Dorsolateral prefrontal cortex (tissue), 120 donors: ENCODE measurements at regions of chr3 and their contacts with region 1.

Region 1: DNA sequence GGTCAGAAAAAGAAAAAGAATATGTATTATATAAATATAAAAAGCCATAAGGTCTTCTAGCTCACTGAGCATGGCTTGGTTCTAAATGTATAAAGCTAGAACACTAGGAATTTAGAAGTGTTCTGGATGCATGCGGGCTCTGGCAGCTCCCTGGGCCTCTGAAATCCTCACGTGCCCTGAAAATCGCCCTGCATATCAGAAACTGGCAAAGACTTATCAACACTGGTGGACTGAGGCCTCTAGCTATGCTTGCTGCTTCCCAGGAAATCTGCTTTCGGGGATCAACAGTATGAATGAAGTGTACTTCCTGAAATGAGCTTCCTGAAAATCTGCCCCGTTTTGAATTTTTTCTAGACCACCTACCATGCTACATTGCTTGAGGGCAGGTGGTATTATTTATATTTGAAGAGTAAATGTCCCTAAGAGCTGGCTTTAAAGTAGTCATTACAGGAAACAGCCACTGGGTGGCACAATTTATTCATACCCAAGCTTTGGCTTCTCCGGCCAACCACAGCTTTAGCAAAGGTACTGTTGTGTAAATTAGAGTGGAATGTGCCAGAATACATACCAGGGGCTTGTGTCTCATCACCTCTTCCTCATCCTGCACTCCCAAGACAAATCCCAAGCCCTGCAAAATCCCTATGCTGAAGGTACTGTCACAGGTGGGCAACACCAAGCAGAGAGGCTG is 17.7 kb downstream of the CRTAP start:
- DNase-seq: peak in 3 of 10 donors; percentile 46 to 74 (median 56)
- H3K4me3 ChIP-seq: no peak overlapping the region
- H3K27ac ChIP-seq: peak overlapping the region in 13 of 59 donors; percentile 2 to 72 (median 19)
- H3K27me3 ChIP-seq: no peaks in the 10 kb centered on the region
- CTCF ChIP-seq: peak; percentile 62 to 94 (median 86)

Region 2: GRCh38 chr3:32989171-32989570 is 142.3 kb before region 1 on chr3:
- intact Hi-C with region 1: no loop called
- DNase-seq: no peak
- H3K4me3 ChIP-seq: no peak overlapping the region
- H3K27ac ChIP-seq: no peak overlapping the region
- H3K27me3 ChIP-seq: no peaks in the 10 kb centered on the region
- CTCF ChIP-seq: no peak

Region 3: GRCh38 chr3:33221241-33221640 is 89.8 kb after region 1 on chr3:
- intact Hi-C with region 1: loop called in 1 of 2 experiments (anchors 5 kb)
- DNase-seq: no peak
- H3K4me3 ChIP-seq: no peak overlapping the region
- H3K27ac ChIP-seq: no peak overlapping the region
- H3K27me3 ChIP-seq: peaks cover 0 to 13% (median 0%) of the 10 kb centered on the region in 45 donors
- CTCF ChIP-seq: no peak

Region 4: DNA sequence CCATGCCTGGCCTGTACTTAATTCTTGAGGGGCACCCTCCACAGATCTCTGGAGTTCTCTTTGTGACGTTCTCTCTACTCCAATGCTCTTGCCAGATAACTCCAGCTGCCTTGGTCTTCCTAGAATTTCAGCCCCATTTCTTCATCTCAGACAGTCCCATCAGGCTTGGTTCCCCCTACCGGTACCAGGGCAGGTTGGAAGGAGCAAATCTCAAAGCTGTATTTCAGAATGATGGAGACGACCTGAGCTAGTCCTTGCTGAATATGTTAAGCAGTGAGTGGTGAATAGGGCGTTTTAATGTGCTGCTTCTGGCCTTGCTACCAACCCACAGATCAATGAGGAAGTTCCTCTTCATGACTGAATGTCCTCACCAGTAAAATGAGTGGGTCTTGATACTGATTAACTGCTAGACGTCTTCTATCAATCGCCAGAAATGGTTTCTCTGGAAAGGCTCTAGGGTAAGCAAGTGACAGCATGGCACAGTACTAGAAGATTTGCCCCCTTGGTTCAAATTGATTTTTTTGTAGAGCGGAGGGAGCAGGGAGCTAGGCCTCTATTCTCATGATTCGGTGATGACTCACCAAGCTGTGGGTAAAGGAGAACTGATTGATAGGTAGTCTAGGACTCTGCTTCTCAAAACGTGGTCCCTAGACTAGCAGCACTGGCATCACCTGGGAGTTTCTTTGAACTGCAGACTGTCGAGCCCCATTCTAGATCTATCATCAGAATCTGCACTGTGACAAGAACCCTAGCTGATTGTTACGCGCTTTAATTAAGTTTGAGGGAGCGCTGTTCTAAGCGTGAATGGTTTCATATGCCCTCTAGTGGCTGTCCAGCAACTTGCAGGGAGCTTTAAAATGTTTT is 241.0 kb after region 1 on chr3:
- intact Hi-C with region 1: loop called (anchors 2 to 5 kb)
- DNase-seq: peak in 3 of 10 donors; percentile 34 to 62 (median 44)
- H3K4me3 ChIP-seq: peak overlapping the region in 17 of 59 donors; percentile 1 to 49 (median 9)
- H3K27ac ChIP-seq: peak overlapping the region in 2 of 59 donors; percentile 4 to 14
- H3K27me3 ChIP-seq: no peaks in the 10 kb centered on the region
- CTCF ChIP-seq: peak; percentile 78 to 98 (median 91)